Heart right ventricle (tissue), 16 donors: ENCODE measurements at regions of chr4 and their contacts with region 1.

Region 1: GRCh38 chr4:128635141-128635954 is 174.2 kb upstream of the JADE1 start:
- DNase-seq: peak; percentile 88 to 89
- ATAC-seq: peak; percentile 71 to 95 (median 92)
- H3K4me3 ChIP-seq: peak overlapping the region in 4 of 10 donors; percentile 9 to 24 (median 14)
- H3K27ac ChIP-seq: peak overlapping the region; percentile 47 to 86 (median 76)
- H3K4me1 ChIP-seq: peaks cover 0 to 28% (median 12%) of the 10 kb centered on the region in 9 donors
- H3K27me3 ChIP-seq: no peaks in the 10 kb centered on the region
- CTCF ChIP-seq: no peak

Region 2: DNA sequence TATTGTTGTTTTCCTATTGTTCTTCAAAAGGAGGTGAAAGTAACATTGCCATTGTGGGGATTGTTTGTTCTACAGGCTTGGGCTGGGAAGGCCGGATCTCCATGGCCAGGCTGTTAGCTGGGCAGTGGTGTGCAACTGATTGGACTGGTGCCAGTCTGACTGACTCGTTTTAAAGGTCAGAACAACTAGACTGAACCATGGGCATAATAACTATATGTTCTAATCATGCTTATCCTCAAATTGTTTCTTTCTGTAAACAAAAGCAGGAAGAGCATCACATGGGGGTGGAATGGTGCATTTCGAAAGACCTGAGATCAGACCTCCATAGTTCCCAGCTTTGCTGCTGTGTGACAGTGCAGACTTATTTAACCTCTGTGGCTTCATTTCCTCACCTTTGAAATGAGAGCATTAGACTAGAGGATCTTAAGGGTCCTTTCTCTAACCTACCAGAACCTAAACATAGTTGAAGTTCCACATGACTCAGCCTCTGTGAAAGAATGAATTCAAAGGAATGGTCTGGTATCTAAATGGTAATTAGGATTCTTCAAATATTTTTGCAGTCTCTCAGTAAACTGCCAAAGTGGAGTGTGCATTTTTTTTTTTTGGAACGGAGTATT is 281.0 kb before region 1 on chr4:
- intact Hi-C with region 1: no loop called
- DNase-seq: peak; percentile 30 to 33
- ATAC-seq: peak in 3 of 8 donors; percentile 19 to 50 (median 22)
- H3K4me3 ChIP-seq: no peak overlapping the region
- H3K27ac ChIP-seq: peak overlapping the region in 5 of 10 donors; percentile 30 to 49 (median 36)
- H3K4me1 ChIP-seq: peaks cover 0 to 50% (median 37%) of the 10 kb centered on the region in 9 donors
- H3K27me3 ChIP-seq: no peaks in the 10 kb centered on the region
- CTCF ChIP-seq: no peak

Region 3: GRCh38 chr4:128574706-128575105 is 60.6 kb before region 1 on chr4:
- intact Hi-C with region 1: loop called in 2 of 10 experiments (anchors 5 to 10 kb)
- DNase-seq: peak; percentile 22 to 60
- ATAC-seq: peak in 7 of 8 donors; percentile 30 to 66 (median 47)
- H3K4me3 ChIP-seq: no peak overlapping the region
- H3K27ac ChIP-seq: no peak overlapping the region
- H3K4me1 ChIP-seq: peaks cover 0 to 43% (median 28%) of the 10 kb centered on the region in 9 donors
- H3K27me3 ChIP-seq: no peaks in the 10 kb centered on the region
- CTCF ChIP-seq: peak; percentile 24 to 66 (median 52)

Region 4: GRCh38 chr4:128653517-128654444 is 18.4 kb after region 1 on chr4:
- intact Hi-C with region 1: loop called in 1 of 10 experiments (anchors 2 kb)
- DNase-seq: peak; percentile 46 to 47
- ATAC-seq: peak; percentile 84 to 95 (median 92)
- H3K4me3 ChIP-seq: no peak overlapping the region
- H3K27ac ChIP-seq: peak overlapping the region; percentile 13 to 63 (median 48)
- H3K4me1 ChIP-seq: peaks cover 0 to 49% (median 16%) of the 10 kb centered on the region in 9 donors
- H3K27me3 ChIP-seq: no peaks in the 10 kb centered on the region
- CTCF ChIP-seq: no peak